ENCODE measurements at regions of chr4 and their contacts with region 1.

Region 1: DNA sequence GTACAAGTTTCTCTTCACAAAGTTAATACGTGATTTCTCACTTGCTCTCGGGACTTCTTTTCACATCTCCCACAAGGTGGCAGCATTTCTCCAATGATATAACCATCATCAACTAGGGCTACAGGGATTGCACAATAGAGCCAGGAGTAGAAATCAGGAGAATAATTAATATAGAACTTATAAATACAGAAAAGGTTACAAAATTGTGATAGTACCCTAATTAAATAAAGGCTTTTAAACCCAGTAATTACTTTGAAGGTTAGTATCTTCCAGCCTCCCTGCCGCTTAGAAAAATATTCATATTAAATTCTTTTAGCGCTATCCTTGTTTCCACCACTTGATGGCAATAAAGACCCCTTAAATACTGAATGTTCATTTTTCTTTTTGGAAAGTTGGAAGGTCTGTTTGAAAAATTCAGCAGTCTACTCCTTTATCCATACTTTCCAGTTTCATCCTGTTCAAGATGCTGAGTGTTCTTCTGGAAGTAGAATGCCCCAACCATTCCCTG is 65.8 kb downstream of the RASGEF1B start:
- DNase-seq: peak in 1 of 3 donors; percentile 61
- ATAC-seq: peak; percentile 91
- H3K4me3 ChIP-seq: no peak overlapping the region
- H3K4me1 ChIP-seq: no peaks in the 10 kb centered on the region
- CTCF ChIP-seq: peak; percentile 25

Region 2: GRCh38 chr4:81260443-81261101 is 145.4 kb before region 1 on chr4:
- intact Hi-C with region 1: no loop called
- DNase-seq: peak in 1 of 3 donors; percentile 26
- ATAC-seq: no peak
- H3K4me3 ChIP-seq: no peak overlapping the region
- H3K4me1 ChIP-seq: no peaks in the 10 kb centered on the region
- CTCF ChIP-seq: no peak

Region 3: GRCh38 chr4:81326581-81326980 is 79.4 kb before region 1 on chr4:
- intact Hi-C with region 1: no loop called
- DNase-seq: no peak
- ATAC-seq: no peak
- H3K4me3 ChIP-seq: no peak overlapping the region
- H3K4me1 ChIP-seq: no peaks in the 10 kb centered on the region
- CTCF ChIP-seq: no peak

Region 4: GRCh38 chr4:81466841-81467671 is 61.1 kb after region 1 on chr4:
- intact Hi-C with region 1: loop called in 1 of 2 experiments (anchors 10 kb)
- DNase-seq: peak in 1 of 3 donors; percentile 98
- ATAC-seq: no peak
- H3K4me3 ChIP-seq: no peak overlapping the region
- H3K4me1 ChIP-seq: peaks cover 34% of the 10 kb centered on the region
- CTCF ChIP-seq: peak; percentile 77

Region 5: GRCh38 chr4:81844717-81845116 is 438.8 kb after region 1 on chr4:
- intact Hi-C with region 1: loop called in 1 of 2 experiments (anchors 5 kb)
- DNase-seq: peak in 2 of 3 donors; percentile 40 to 92
- ATAC-seq: peak; percentile 98
- H3K4me3 ChIP-seq: no peak overlapping the region
- H3K4me1 ChIP-seq: no peaks in the 10 kb centered on the region
- CTCF ChIP-seq: peak; percentile 63

Region 6: DNA sequence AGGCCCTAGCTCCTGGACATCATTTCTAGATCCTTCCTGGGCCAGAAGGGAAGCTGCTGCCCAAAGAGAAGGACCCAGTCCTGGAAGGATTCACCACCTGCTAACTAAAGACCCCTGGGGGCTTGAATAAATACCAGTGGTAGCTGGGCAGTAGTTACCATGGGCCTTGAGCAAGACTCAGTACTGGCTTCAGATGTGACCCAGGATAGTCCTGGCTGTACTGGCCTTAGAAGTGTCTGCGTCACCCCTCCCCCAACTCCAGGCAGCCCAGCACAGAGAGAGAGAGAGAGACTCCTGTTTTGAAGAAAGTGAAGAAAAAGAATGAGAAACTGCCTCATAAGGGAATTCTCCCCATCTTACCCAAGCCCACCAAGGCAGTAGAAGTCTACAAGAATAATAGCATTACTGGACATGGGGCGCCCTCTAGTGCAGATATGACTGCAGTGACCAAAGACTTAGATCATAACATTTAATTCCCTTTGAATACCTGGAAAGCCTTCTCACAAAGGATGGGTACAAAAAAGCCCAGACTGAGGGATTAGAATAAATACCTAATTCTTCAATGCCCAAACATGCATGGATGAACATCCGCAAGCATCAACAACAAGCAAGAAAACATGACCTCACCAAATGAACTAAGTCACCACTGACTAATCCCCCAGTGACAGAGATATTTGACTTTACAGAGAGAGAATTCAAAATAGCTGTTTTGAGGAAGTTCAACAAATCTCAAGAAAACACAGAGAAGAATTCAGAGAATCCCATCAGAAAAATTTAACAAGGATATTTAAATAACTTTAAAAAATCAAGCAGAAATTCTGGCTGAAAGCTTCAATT is 796.1 kb after region 1 on chr4:
- intact Hi-C with region 1: loop called in 1 of 2 experiments (anchors 5 kb)
- DNase-seq: peak in 1 of 3 donors; percentile 71
- ATAC-seq: peak; percentile 46
- H3K4me3 ChIP-seq: no peak overlapping the region
- H3K4me1 ChIP-seq: no peaks in the 10 kb centered on the region
- CTCF ChIP-seq: no peak

Region 7: GRCh38 chr4:82268050-82268825 is 862.3 kb after region 1 on chr4:
- intact Hi-C with region 1: loop called in 1 of 2 experiments (anchors 5 kb)
- DNase-seq: peak in 1 of 3 donors; percentile 55
- ATAC-seq: peak; percentile 82
- H3K4me3 ChIP-seq: no peak overlapping the region
- H3K4me1 ChIP-seq: no peaks in the 10 kb centered on the region
- CTCF ChIP-seq: peak; percentile 28